AG04449 (cell line): ENCODE measurements at regions of chr1 and their contacts with region 1.

Region 1: DNA sequence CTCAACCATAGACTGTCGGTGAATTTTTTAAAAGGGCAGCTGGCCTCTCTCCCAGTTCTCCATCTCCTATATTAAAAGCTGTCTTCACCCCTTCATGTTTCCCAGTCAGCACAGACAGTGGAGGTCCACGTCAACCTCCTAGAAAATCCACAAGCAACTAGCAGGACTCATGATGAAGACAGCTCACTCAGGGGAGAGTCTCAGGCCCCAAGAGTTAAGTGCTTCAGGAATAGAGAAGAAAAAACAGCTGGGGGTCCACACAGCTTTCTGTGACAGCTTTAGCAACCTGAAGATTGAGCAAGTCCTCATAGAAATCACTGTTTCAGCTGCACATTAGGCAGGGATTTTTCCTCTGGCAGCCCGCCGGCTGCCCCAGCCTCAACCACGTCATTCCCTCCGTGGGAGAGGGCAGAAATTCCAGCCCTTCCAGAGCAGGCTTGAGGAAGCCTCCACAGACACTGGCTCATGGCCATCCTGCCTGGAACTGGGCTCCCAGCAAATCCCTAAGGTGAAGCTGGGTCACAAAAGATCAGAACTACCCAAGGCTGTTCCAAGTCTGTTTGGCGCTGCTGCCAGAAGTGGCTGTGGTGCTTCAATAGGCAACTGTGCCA is 15.2 kb downstream of the GPR161 start:
- DNase-seq: peak; percentile 75
- H3K4me3 ChIP-seq: no peak overlapping the region
- CTCF ChIP-seq: no peak

Region 2: DNA sequence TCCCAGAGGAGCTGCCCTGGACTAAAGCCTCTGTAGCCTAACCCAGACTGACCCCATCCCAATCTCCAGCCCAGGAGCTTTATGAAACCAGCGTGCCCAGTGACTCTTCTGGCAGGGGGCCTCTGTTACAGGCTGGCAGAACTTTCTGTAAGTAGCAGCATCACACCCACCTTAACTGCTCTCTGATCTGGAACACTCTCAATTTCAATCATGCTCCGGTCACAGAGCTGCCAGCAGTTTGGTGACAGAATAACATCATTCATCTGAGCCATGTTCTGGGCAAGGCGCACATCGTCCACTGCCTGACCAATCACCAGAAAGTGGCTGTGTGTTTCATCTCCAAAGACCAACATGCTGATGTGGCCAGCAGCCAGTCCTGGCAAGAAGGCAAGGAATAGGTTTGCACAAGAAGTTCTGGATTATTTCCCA is 222.2 kb before region 1 on chr1:
- CTCF ChIA-PET with region 1: no interaction called
- POLR2A ChIA-PET with region 1: no interaction called
- DNase-seq: no peak
- H3K4me3 ChIP-seq: no peak overlapping the region
- CTCF ChIP-seq: no peak

Region 3: GRCh38 chr1:168136709-168137514 is 15.4 kb after region 1 on chr1 and contains the start of gene GPR161:
- CTCF ChIA-PET with region 1: interaction called, 10 read pairs
- POLR2A ChIA-PET with region 1: interaction called, 4 read pairs
- DNase-seq: no peak
- H3K4me3 ChIP-seq: peak within 1 kb of the TSS; percentile 79
- CTCF ChIP-seq: no peak